ENCODE measurements at regions of chr7 and their contacts with region 1.

Region 1: GRCh38 chr7:116929914-116930913 is 23.1 kb upstream of the ST7 start:
- DNase-seq: peak; percentile 89

Region 2: DNA sequence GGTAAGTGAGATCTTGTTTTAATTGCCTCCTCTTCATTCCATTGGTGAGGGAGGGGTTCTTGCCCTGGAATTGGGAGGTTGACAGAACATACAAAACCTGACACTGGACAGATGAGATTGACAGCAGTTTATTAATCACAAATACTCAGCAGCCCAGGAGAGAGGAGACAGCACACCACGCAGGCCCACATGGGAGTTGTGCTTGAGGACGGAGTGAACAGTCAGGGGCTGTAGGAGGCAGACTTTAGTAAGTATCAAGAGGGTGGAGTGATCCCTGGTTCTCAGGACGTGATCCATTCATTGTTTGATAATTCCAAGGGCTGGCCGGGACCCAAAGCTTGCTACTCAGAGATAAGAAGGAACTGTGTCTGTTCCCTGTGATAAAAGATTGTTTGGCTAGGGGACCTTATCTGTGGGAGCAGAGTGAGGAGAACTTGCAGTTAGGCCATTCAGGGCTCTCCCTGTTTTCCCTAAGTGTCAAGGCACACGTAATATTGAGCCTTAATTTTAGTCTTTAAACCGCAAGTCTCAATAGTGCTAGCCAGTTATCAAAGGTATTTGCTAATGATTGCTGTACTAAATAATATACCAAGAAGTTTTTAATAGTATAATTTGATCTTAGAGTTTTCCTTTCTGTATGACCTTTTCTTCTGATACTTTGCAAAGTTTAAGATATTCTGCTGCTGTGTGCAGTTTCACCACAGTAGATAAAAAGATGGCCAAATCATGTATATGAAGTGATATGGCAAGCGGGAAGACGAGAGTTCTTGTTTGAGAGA is 53.4 kb before region 1 on chr7:
- in situ Hi-C with region 1: no loop called
- DNase-seq: no peak

Region 3: DNA sequence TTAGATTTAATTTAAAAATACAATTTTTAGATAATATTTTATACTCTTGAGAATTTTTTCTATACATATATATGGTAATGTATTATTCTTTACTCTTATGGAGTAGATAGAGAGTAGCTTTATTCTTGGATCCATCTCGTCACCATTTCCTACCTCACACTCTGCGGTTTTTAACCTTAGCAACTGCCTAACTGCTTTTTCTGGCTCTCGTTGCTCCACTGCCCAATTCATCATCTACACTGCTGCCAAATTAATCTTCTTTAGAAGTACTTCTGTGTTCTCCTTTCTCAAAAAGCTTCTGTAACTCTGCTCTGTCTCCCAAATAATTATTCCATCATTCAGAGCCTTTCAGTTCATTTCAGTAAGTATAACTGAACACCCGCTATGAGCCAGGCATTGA is 32.6 kb before region 1 on chr7:
- in situ Hi-C with region 1: no loop called
- DNase-seq: no peak

Region 4: DNA sequence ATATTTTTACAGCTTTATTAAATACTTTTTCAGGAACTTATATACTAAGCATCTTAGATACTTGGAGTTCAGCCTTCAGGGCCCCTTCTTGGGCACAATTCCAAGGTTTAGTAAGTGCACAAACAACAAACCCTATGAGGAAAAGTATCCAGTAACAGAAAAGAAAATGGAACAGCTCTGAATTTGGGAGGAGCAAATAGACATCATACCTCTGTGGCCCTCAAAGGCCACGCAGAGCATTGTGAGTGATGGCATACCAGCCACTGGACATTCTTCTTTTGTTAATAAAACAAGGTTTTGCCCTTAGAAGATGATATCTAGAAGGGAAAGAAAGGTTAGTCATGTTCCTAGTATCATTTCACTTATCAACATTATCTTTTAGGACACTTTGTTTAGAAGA is 69.1 kb after region 1 on chr7:
- in situ Hi-C with region 1: loop called (anchors 10 kb)
- DNase-seq: no peak

Measured in SK-MEL-5 (cell line).